A549 (cell line): ENCODE measurements at regions of chr3 and their contacts with region 1.

Region 1: GRCh38 chr3:124761250-124761796 is 31.1 kb downstream of the UMPS start:
- DNase-seq: peak; percentile 68 to 91
- ATAC-seq: peak; percentile 73
- H3K4me3 ChIP-seq: no peak overlapping the region
- H3K27ac ChIP-seq: peak overlapping the region; percentile 60 to 75
- H3K4me1 ChIP-seq: peaks cover 28% of the 10 kb centered on the region
- CTCF ChIP-seq: peak; percentile 95
- EP300 ChIP-seq: no peak
- POLR2A ChIP-seq: no peak
- RAD21 ChIP-seq: peak; percentile 97 to 98

Region 2: GRCh38 chr3:124741027-124741426 is 20.3 kb before region 1 on chr3:
- CTCF ChIA-PET with region 1: interaction called, 27 read pairs
- POLR2A ChIA-PET with region 1: no interaction called
- DNase-seq: no peak
- ATAC-seq: no peak
- H3K4me3 ChIP-seq: no peak overlapping the region
- H3K27ac ChIP-seq: no peak overlapping the region
- H3K4me1 ChIP-seq: no peaks in the 10 kb centered on the region
- CTCF ChIP-seq: no peak
- EP300 ChIP-seq: no peak
- POLR2A ChIP-seq: no peak
- RAD21 ChIP-seq: no peak

Region 3: DNA sequence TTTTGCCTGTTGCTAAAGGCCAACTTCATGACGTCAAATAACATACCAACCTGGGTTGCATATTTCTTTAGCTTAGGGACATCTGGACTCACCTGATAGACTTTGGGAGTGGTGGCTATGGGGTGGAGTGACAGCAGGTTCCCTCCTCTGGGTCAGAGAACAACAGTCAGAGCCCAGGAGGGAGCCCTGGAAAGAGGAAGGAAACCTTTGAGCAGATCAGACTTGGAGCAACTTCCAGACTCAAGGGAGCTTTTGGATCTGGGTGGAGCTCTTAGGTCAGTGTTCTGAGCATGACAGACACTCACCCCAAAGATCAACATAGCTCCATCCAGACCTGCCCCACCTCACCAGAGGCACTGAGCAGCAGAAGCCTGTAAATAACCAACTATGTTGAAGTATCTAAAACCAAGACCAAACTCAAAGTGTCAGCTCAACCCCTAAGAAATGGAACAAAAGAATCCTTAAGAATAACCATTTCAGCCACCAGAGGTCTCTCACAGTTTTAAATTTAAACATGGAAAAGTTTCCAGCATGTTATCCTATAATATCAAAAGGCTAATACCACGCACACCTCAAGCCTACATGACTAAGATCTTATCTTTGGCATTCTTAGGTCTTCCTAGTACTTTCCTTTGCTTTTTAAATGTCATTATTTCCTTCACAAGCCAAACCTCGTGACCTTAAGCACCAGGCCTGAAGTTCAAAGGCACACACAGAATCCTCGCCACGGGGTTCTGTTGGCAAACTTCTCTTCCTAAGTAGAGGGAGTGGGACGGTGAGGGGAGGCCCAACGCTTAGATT is 25.3 kb after region 1 on chr3:
- CTCF ChIA-PET with region 1: interaction called, 42 read pairs
- POLR2A ChIA-PET with region 1: no interaction called
- DNase-seq: peak in 1 of 2 experiments; percentile 66
- ATAC-seq: peak; percentile 62 to 65
- H3K4me3 ChIP-seq: no peak overlapping the region
- H3K27ac ChIP-seq: peak overlapping the region; percentile 76 to 85
- H3K4me1 ChIP-seq: peaks cover 58% of the 10 kb centered on the region
- CTCF ChIP-seq: peak; percentile 65
- EP300 ChIP-seq: no peak
- POLR2A ChIP-seq: no peak
- RAD21 ChIP-seq: peak; percentile 71 to 78

Region 4: DNA sequence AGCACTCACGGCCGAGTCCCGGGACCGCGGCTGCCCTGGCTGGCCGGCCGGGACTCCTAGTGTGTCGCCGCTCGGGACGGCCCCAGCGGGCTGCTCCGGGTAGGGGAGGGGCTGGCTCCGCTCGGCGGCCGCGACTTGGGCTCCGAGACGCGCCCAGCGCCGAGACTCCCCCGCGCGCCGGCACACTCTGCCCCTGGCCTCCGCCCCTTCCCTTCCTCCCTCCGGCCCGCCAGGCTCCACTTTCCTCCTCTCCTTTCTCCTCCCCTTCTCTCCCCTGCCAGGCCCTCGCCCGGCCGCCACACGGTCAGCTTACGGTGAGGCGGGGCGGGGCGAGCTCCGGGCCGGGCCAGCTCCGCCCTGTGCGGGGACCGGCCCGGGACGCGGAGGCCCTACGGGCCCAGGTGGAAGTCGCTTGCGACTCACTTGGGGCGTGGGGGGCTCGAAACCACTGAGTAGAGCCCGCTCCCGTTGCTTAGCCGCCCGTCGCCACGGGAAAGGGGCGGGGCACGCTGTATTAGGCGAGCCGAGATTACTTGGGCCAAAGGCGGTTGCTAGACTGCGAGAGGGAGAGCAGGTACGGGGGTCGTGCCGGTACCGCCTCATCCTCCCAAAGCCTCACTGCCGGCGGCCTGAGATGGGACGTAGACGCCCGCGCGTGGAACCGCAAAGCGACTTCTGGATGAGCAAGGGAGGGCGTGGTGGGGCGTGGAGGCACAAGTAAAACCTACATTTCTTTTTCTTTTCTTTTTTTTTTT is 126.0 kb after region 1 on chr3 and contains the start of gene ITGB5:
- CTCF ChIA-PET with region 1: interaction called, 20 read pairs
- POLR2A ChIA-PET with region 1: interaction called, 10 read pairs
- DNase-seq: peak; percentile 53 to 88
- ATAC-seq: peak; percentile 84 to 89
- H3K4me3 ChIP-seq: peak within 1 kb of the TSS; percentile 60
- H3K27ac ChIP-seq: peak within 1 kb of the TSS; percentile 90 to 99
- H3K4me1 ChIP-seq: peaks cover 41% of the 10 kb centered on the region
- CTCF ChIP-seq: no peak
- EP300 ChIP-seq: no peak
- POLR2A ChIP-seq: peak; percentile 68
- RAD21 ChIP-seq: no peak; a peak in 1 of 5 replicates
- polyA plus RNA-seq, gene ITGB5: 260 and 476 TPM in 2 replicates

Region 5: DNA sequence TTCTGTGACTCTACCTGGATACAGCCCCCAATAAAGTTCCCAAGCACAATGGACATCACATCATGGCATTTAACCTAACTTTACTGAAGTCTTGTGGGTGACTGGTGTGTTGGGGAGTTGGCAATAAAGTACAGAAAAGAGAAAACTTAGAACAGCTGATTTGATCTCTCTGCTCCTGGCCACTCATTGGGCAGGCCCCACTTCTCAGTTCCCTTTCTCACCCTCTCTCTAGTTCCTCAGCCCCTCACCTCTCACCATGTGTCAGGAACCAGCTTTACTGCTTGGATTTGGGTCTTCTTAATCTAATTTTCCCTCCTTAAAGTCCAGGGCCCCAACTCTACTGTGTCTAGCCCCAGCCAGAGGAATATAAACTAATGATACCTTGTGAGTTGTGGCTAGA is 173.9 kb after region 1 on chr3:
- CTCF ChIA-PET with region 1: interaction called, 17 read pairs
- POLR2A ChIA-PET with region 1: no interaction called
- DNase-seq: no peak
- ATAC-seq: no peak
- H3K4me3 ChIP-seq: no peak overlapping the region
- H3K27ac ChIP-seq: no peak overlapping the region
- H3K4me1 ChIP-seq: no peaks in the 10 kb centered on the region
- CTCF ChIP-seq: no peak
- EP300 ChIP-seq: no peak
- POLR2A ChIP-seq: no peak
- RAD21 ChIP-seq: no peak

Region 6: DNA sequence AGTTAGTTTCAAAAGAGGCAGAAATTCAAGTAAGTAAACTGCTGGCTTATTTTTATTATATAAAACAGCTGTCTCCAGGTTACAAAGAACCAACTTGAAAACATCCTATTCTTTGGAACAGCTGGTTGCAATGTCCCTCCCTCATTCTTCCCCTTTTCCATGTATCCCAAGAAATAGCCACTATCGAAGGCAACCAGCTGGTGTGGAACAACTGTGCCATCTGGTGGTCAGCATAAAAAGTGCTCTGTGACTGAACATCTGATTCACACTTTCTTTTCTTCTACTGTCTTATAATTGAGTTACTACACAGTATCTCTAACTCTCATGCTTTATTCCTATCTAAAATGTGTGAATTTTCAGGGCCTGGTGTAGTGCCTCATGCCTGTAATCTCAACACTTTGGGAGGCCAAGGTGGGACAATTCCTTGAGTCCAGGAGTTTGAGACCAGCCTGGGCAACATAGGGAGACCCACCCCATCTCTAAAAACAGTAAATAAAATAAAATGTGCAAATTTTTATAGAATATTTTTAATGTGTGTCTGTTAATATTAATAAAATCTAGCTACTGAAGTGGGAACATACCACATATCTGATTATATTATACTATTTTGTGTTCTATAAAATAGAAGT is 824.4 kb after region 1 on chr3:
- CTCF ChIA-PET with region 1: interaction called, 16 read pairs
- POLR2A ChIA-PET with region 1: no interaction called
- DNase-seq: peak; percentile 43 to 64
- ATAC-seq: peak; percentile 64 to 83; a peak in 4 of 6 replicates
- H3K4me3 ChIP-seq: no peak overlapping the region
- H3K27ac ChIP-seq: no peak overlapping the region
- H3K4me1 ChIP-seq: no peaks in the 10 kb centered on the region
- CTCF ChIP-seq: peak; percentile 76
- EP300 ChIP-seq: no peak
- POLR2A ChIP-seq: no peak
- RAD21 ChIP-seq: peak; percentile 72 to 79